Naive thymus-derived CD4-positive, alpha-beta T cell (primary cell): ENCODE measurements at regions of chr3 and their contacts with region 1.

Region 1: GRCh38 chr3:156859578-156859977 is 33.4 kb downstream of the LEKR1 start:
- DNase-seq: no peak
- ATAC-seq: no peak
- H3K4me3 ChIP-seq: no peak overlapping the region
- H3K4me3 Mint-ChIP-seq: no peak overlapping the region
- H3K27ac ChIP-seq: no peak overlapping the region
- H3K27ac Mint-ChIP-seq: no peak overlapping the region
- H3K4me1 ChIP-seq: no peaks in the 10 kb centered on the region
- H3K4me1 Mint-ChIP-seq: peaks cover 0 to 6% (median 0%) of the 10 kb centered on the region in 7 donors
- H3K27me3 ChIP-seq: no peaks in the 10 kb centered on the region
- H3K27me3 Mint-ChIP-seq: peaks cover 0 to 6% (median 0%) of the 10 kb centered on the region in 5 donors

Region 2: DNA sequence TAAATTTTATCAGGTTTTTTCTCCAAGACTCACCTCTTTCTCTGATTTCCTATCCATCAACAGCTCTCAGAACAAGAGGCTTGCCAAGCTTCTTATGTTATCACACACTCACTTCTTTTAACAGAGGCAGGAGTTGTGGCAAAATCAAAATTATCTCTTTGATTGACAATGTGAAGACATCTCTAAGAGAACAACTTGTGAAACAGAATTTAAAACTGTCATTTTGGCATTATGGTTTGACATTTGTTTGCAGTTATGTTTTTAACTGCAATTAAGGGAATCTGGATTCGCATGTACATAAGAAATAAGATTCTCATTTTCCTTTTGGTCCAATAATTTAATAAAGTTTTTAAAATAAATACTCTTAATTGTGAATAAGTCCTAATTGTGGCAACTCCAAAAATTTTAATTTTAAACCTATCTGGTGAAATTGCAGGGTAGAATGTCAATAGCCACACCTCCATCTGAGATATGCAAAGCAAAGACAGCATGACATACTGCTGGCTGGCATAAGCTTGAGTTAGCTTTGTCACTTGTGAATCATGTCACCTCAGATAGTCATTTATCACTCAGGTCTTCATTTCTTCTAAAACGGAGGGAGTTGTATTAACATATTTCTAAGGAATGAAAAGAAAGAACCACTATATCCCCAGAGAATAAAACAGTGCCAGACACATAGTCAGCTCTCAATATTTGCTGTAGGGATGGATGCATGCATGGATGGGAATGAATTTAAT is 141.8 kb after region 1 on chr3:
- CTCF ChIA-PET with region 1: no interaction called
- POLR2A ChIA-PET with region 1: no interaction called
- intact Hi-C with region 1: loop called in 1 of 2 experiments (anchors 10 kb)
- DNase-seq: no peak
- ATAC-seq: no peak
- H3K4me3 ChIP-seq: no peak overlapping the region
- H3K4me3 Mint-ChIP-seq: no peak overlapping the region
- H3K27ac ChIP-seq: no peak overlapping the region
- H3K27ac Mint-ChIP-seq: no peak overlapping the region
- H3K4me1 ChIP-seq: no peaks in the 10 kb centered on the region
- H3K4me1 Mint-ChIP-seq: no peaks in the 10 kb centered on the region
- H3K27me3 ChIP-seq: no peaks in the 10 kb centered on the region
- H3K27me3 Mint-ChIP-seq: peaks cover 5 to 36% (median 17%) of the 10 kb centered on the region in 5 donors